ENCODE measurements at regions of chr5 and their contacts with region 1.

Region 1: GRCh38 chr5:81751009-81751835 is at the start of gene SSBP2:
- DNase-seq: peak; percentile 87 to 99
- H3K4me3 ChIP-seq: peak within 1 kb of the TSS; percentile 79
- H3K27ac ChIP-seq: peak within 1 kb of the TSS; percentile 86
- H3K4me1 ChIP-seq: peaks cover 29% of the 10 kb centered on the region
- H3K27me3 ChIP-seq: no peaks in the 10 kb centered on the region
- CTCF ChIP-seq: no peak
- total RNA-seq, gene SSBP2: 3.5 and 6.4 TPM in 2 replicates

Region 2: GRCh38 chr5:81513982-81514381 is 237.2 kb before region 1 on chr5:
- CTCF ChIA-PET with region 1: no interaction called
- POLR2A ChIA-PET with region 1: no interaction called
- intact Hi-C with region 1: loop called (anchors 1 kb)
- DNase-seq: no peak
- H3K4me3 ChIP-seq: no peak overlapping the region
- H3K27ac ChIP-seq: no peak overlapping the region
- H3K4me1 ChIP-seq: no peaks in the 10 kb centered on the region
- H3K27me3 ChIP-seq: no peaks in the 10 kb centered on the region
- CTCF ChIP-seq: peak; percentile 64

Region 3: GRCh38 chr5:81657389-81657788 is 93.8 kb before region 1 on chr5:
- CTCF ChIA-PET with region 1: no interaction called
- POLR2A ChIA-PET with region 1: no interaction called
- intact Hi-C with region 1: no loop called
- DNase-seq: peak in 1 of 2 experiments; percentile 49
- H3K4me3 ChIP-seq: no peak overlapping the region
- H3K27ac ChIP-seq: no peak overlapping the region
- H3K4me1 ChIP-seq: peaks cover 10% of the 10 kb centered on the region
- H3K27me3 ChIP-seq: no peaks in the 10 kb centered on the region
- CTCF ChIP-seq: no peak

Region 4: DNA sequence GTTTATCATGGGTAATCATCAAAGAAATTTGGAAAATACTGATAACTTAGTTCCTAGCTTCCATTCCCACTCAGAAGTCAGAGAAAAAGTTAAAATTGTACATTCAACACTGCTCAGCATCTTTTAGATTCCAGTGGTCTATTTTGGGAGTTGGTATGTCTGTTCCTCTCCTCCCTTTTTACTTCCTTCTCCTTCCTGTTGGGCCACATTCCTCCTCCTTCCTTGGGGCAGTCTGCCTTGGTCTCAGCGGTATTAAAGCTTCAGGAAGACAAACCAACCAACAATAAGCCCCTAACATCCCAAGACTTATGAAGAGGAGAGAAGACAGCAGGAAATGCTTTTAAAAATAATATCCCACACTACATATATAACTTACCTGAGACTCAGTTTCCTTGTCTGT is 49.6 kb after region 1 on chr5:
- CTCF ChIA-PET with region 1: interaction called, 4 read pairs
- POLR2A ChIA-PET with region 1: no interaction called
- intact Hi-C with region 1: loop called (anchors 1 kb)
- DNase-seq: peak; percentile 44 to 76
- H3K4me3 ChIP-seq: no peak overlapping the region; the same call in 1 of the 2 replicates
- H3K27ac ChIP-seq: peak overlapping the region; percentile 54
- H3K4me1 ChIP-seq: peaks cover 25% of the 10 kb centered on the region
- H3K27me3 ChIP-seq: no peaks in the 10 kb centered on the region
- CTCF ChIP-seq: no peak

Region 5: GRCh38 chr5:81842879-81843301 is 91.7 kb after region 1 on chr5:
- CTCF ChIA-PET with region 1: interaction called, 5 read pairs
- POLR2A ChIA-PET with region 1: interaction called, 3 read pairs
- intact Hi-C with region 1: loop called (anchors 2 kb)
- DNase-seq: peak; percentile 20 to 94
- H3K4me3 ChIP-seq: peak overlapping the region; percentile 46
- H3K27ac ChIP-seq: peak overlapping the region; percentile 74
- H3K4me1 ChIP-seq: peaks cover 27% of the 10 kb centered on the region
- H3K27me3 ChIP-seq: no peaks in the 10 kb centered on the region
- CTCF ChIP-seq: no peak

Region 6: DNA sequence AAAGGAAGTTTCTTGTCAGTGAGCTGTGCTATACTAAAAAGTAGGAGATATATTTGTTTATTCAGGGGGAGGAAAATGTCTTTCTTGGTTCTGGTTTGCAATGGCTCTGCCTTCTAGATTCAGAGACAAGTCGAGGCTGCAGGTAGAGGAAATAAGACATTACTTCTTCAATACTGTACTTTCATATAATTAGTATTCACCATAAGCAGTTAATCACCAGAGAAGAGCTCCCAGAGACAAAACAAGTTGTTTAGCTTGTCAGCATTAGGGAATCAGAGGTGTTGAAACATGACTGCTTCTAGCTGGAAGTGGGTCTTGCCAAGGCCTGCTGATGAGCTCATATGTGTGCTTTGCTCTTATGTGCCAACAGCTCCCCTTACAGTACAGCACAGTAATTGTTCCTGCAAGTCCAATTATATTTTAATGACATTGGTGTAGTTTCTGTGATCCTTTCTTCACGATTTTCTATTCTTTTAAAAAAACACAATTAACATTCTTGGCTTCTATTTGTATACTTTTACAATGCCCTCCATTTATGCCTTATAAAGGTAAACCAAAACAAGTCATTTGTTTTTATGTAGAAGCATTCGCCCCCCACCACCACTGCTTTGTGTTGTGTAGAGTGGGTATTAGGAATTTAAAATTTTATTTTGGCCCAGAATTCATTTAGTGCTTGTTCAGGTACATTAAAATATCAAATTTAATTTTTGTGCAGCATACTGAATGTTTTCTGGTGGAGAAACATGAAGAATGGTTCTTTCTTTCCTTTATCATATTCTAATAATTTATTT is 414.7 kb after region 1 on chr5:
- CTCF ChIA-PET with region 1: interaction called, 6 read pairs
- POLR2A ChIA-PET with region 1: no interaction called
- intact Hi-C with region 1: loop called (anchors 1 kb)
- DNase-seq: peak; percentile 28 to 79
- H3K4me3 ChIP-seq: no peak overlapping the region
- H3K27ac ChIP-seq: no peak overlapping the region
- H3K4me1 ChIP-seq: peaks cover 7% of the 10 kb centered on the region; the same call in 1 of the 2 replicates
- H3K27me3 ChIP-seq: no peaks in the 10 kb centered on the region
- CTCF ChIP-seq: peak; percentile 83